GM12878 (cell line): ENCODE measurements at regions of chr1 and their contacts with region 1.

Region 1: GRCh38 chr1:222814536-222815439 is at the start of gene DISP1:
- DNase-seq: peak; percentile 35
- ATAC-seq: peak; percentile 90
- H3K4me3 ChIP-seq: peak within 1 kb of the TSS; percentile 76
- H3K27ac ChIP-seq: 0 out of 2 replicates have a peak within 1 kb of the TSS, but pooled peaks have one; percentile 29
- H3K4me1 ChIP-seq: no peaks in the 10 kb centered on the region
- H3K27me3 ChIP-seq: no peaks in the 10 kb centered on the region
- CTCF ChIP-seq: no peak
- EP300 ChIP-seq: no peak
- POLR2A ChIP-seq: peak; percentile 83
- RAD21 ChIP-seq: peak; percentile 1; the same call in 1 of the 2 replicates
- polyA plus RNA-seq, gene DISP1: 0.11 to 0.37 TPM

Region 2: GRCh38 chr1:223683586-223684487 is 869.0 kb after region 1 on chr1:
- CTCF ChIA-PET with region 1: no interaction called
- POLR2A ChIA-PET with region 1: no interaction called
- RAD21 ChIA-PET with region 1: no interaction called
- SMC1A ChIA-PET with region 1: interaction called, 3 read pairs
- in situ Hi-C with region 1: no loop called
- intact Hi-C with region 1: loop called (anchors 10 kb)
- DNase-seq: no peak
- ATAC-seq: peak; percentile 81
- H3K4me3 ChIP-seq: no peak overlapping the region
- H3K27ac ChIP-seq: no peak overlapping the region
- H3K4me1 ChIP-seq: no peaks in the 10 kb centered on the region
- H3K27me3 ChIP-seq: no peaks in the 10 kb centered on the region; a peak in 2 of 4 replicates
- CTCF ChIP-seq: peak; percentile 53 to 75 (median 67)
- EP300 ChIP-seq: no peak
- POLR2A ChIP-seq: no peak
- RAD21 ChIP-seq: peak; percentile 80